A673 (cell line): ENCODE measurements at regions of chr3 and their contacts with region 1.

Region 1: GRCh38 chr3:116863822-116864589 is 154.4 kb downstream of the TUSC7 start:
- DNase-seq: peak; percentile 65
- H3K4me3 ChIP-seq: peak overlapping the region; percentile 22
- H3K27ac ChIP-seq: no peak overlapping the region
- H3K4me1 ChIP-seq: no peaks in the 10 kb centered on the region
- H3K27me3 ChIP-seq: no peaks in the 10 kb centered on the region
- CTCF ChIP-seq: peak; percentile 68

Region 2: GRCh38 chr3:116770815-116771450 is 93.1 kb before region 1 on chr3:
- CTCF ChIA-PET with region 1: interaction called, 4 read pairs
- POLR2A ChIA-PET with region 1: no interaction called
- intact Hi-C with region 1: loop called (anchors 2 kb)
- DNase-seq: peak; percentile 91
- H3K4me3 ChIP-seq: no peak overlapping the region
- H3K27ac ChIP-seq: no peak overlapping the region
- H3K4me1 ChIP-seq: no peaks in the 10 kb centered on the region
- H3K27me3 ChIP-seq: no peaks in the 10 kb centered on the region
- CTCF ChIP-seq: peak; percentile 99

Region 3: DNA sequence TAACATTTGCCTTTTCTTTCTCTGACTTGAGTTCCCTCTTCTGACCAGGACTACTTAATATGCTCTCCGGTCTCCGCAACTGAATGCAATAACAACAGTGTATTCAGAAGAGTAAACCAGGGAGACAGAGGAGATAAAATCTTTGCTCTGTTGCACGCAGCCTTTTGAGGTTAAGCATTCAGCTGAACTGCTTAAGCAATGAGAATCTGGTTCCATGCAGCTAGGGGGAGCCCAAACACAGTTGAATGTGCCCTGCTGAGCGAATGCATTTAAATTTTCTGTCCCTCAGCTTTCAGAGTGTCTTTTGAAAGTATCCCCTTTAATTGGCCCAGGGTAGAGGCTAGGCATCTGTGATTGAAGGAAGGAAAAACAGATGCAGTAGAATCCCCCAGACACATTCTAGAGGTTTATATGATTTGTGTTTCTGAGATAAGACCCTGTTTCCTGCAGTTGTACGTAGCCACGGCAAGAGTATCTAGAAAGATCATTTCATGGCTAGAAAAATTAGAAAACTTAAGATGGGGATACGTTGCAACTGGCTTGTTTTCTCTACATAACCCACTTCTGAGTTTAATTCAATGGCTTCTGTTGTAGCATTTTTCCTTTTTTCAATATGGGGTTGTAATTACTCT is 155.2 kb after region 1 on chr3:
- CTCF ChIA-PET with region 1: no interaction called
- POLR2A ChIA-PET with region 1: no interaction called
- intact Hi-C with region 1: loop called (anchors 10 kb)
- DNase-seq: peak; percentile 73
- H3K4me3 ChIP-seq: no peak overlapping the region
- H3K27ac ChIP-seq: no peak overlapping the region
- H3K4me1 ChIP-seq: no peaks in the 10 kb centered on the region
- H3K27me3 ChIP-seq: no peaks in the 10 kb centered on the region
- CTCF ChIP-seq: peak; percentile 81

Region 4: GRCh38 chr3:117526470-117527079 is 662.6 kb after region 1 on chr3:
- CTCF ChIA-PET with region 1: no interaction called
- POLR2A ChIA-PET with region 1: no interaction called
- intact Hi-C with region 1: loop called (anchors 5 kb)
- DNase-seq: peak; percentile 37
- H3K4me3 ChIP-seq: no peak overlapping the region
- H3K27ac ChIP-seq: no peak overlapping the region
- H3K4me1 ChIP-seq: no peaks in the 10 kb centered on the region
- H3K27me3 ChIP-seq: no peaks in the 10 kb centered on the region
- CTCF ChIP-seq: peak; percentile 69

Region 5: DNA sequence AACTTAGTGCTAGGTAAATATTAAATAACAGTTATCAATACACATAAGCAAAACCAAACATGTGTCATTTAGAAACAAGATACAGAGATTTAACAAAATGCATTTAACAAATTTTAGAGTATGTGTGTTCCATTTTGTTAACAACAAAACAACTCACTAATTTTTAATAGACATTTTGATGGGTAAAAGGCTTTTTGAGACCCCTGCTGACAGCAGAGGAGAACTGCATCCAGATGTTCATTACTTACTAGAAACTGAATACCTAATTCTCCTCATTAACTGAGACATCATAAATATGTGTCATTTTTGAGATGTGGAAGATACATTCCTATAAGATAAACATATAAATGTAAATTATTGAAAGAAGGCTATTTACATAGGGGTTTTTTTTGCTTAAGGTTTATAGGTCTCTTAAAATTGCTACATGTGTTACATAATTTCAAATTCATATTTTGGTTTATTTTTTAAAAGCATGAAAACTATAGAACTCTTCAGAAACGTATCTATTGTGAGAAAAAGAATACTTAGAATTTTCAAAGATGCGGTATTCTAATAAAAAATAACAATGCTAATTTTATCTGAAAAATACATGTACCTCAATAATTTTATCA is 855.4 kb after region 1 on chr3:
- CTCF ChIA-PET with region 1: no interaction called
- POLR2A ChIA-PET with region 1: no interaction called
- intact Hi-C with region 1: loop called (anchors 5 kb)
- DNase-seq: peak; percentile 37
- H3K4me3 ChIP-seq: no peak overlapping the region
- H3K27ac ChIP-seq: no peak overlapping the region
- H3K4me1 ChIP-seq: no peaks in the 10 kb centered on the region
- H3K27me3 ChIP-seq: no peaks in the 10 kb centered on the region
- CTCF ChIP-seq: peak; percentile 82

Region 6: DNA sequence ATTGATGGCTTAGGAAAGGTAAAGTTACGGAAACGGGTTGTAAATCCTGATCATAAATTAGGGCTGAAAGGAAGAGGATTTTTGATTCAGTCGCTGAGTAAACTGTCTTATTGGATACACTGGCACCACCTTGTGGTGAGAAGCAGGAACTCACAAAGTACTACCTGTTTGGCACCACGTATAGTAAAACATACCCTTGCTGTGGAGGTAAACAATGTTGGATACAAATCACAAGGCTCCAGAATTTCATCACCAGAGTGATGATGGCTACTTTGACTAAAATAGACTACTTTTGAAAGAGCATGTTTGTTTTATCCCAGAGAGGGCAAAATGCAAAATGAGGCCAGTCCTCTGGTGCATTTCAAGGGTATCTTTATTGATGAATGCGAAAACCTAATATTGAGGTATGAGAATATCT is 1953.8 kb after region 1 on chr3:
- CTCF ChIA-PET with region 1: no interaction called
- POLR2A ChIA-PET with region 1: no interaction called
- intact Hi-C with region 1: loop called (anchors 10 kb)
- DNase-seq: peak; percentile 68
- H3K4me3 ChIP-seq: no peak overlapping the region
- H3K27ac ChIP-seq: no peak overlapping the region
- H3K4me1 ChIP-seq: no peaks in the 10 kb centered on the region
- H3K27me3 ChIP-seq: no peaks in the 10 kb centered on the region
- CTCF ChIP-seq: peak; percentile 88